HEK293 (cell line): ENCODE measurements at regions of chr4 and their contacts with region 1.

Region 1: DNA sequence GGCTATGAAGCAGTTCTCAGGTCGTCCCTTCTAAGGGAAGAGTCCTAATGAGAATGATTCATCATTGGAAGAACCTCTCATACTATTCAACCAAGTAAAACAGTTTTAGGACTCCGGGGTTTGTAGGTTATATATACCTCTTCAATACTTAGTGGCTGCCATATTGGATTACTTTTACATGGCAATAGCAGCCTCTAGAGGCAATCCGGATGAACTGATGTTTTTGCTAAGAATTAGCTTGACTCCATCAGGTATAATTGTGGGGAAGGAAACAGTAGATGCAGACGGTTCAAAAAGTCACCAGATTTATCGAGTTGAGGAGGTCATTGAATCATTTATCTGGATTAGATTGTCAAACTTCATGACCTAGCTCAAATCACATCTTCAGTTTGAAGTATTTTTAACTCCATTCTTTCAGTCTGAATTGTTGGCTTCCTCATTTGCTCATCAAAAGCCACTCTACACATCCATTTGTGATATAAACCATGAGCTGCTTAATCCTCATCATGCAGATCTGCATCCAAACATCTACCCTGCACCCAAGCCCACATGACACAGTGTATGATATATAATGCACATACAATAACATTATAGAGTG is 28.4 kb downstream of the GUCY1B1 start:
- H3K4me3 ChIP-seq: no peak overlapping the region
- H3K27ac ChIP-seq: no peak overlapping the region
- H3K4me1 ChIP-seq: no peaks in the 10 kb centered on the region
- CTCF ChIP-seq: 0 out of 2 replicates have a peak, but pooled peaks have one; percentile 8

Region 2: GRCh38 chr4:155403886-155404285 is 383.3 kb before region 1 on chr4:
- CTCF ChIA-PET with region 1: interaction called, 13 read pairs
- POLR2A ChIA-PET with region 1: no interaction called
- H3K4me3 ChIP-seq: no peak overlapping the region
- H3K27ac ChIP-seq: no peak overlapping the region
- H3K4me1 ChIP-seq: no peaks in the 10 kb centered on the region
- CTCF ChIP-seq: peak; percentile 22

Region 3: GRCh38 chr4:155441475-155441874 is 345.7 kb before region 1 on chr4:
- CTCF ChIA-PET with region 1: interaction called, 18 read pairs
- POLR2A ChIA-PET with region 1: no interaction called
- H3K4me3 ChIP-seq: no peak overlapping the region
- H3K27ac ChIP-seq: no peak overlapping the region
- H3K4me1 ChIP-seq: no peaks in the 10 kb centered on the region
- CTCF ChIP-seq: no peak

Region 4: GRCh38 chr4:155529272-155529671 is 257.9 kb before region 1 on chr4:
- CTCF ChIA-PET with region 1: interaction called, 10 read pairs
- POLR2A ChIA-PET with region 1: no interaction called
- H3K4me3 ChIP-seq: no peak overlapping the region
- H3K27ac ChIP-seq: no peak overlapping the region
- H3K4me1 ChIP-seq: no peaks in the 10 kb centered on the region
- CTCF ChIP-seq: no peak